Ovary (tissue), 10 donors: ENCODE measurements at regions of chr5 and their contacts with region 1.

Region 1: GRCh38 chr5:82165740-82166530 is 112.2 kb downstream of the RPS23 start:
- DNase-seq: peak; percentile 67 to 83 (median 75)
- H3K4me3 ChIP-seq: no peak overlapping the region
- H3K27ac ChIP-seq: no peak overlapping the region
- H3K4me1 ChIP-seq: peaks cover 4% of the 10 kb centered on the region
- H3K27me3 ChIP-seq: no peaks in the 10 kb centered on the region
- CTCF ChIP-seq: peak; percentile 75 to 89 (median 84)
- EP300 ChIP-seq: no peak
- POLR2A ChIP-seq: no peak

Region 2: GRCh38 chr5:81425569-81425968 is 740.4 kb before region 1 on chr5:
- intact Hi-C with region 1: loop called in 2 of 4 experiments (anchors 5 to 10 kb)
- DNase-seq: no peak
- H3K4me3 ChIP-seq: no peak overlapping the region
- H3K27ac ChIP-seq: no peak overlapping the region
- H3K4me1 ChIP-seq: peaks cover 3% of the 10 kb centered on the region
- H3K27me3 ChIP-seq: no peaks in the 10 kb centered on the region
- CTCF ChIP-seq: peak; percentile 40 to 60 (median 45)
- EP300 ChIP-seq: no peak
- POLR2A ChIP-seq: no peak

Region 3: GRCh38 chr5:81696418-81697397 is 469.2 kb before region 1 on chr5:
- intact Hi-C with region 1: no loop called
- DNase-seq: no peak
- H3K4me3 ChIP-seq: no peak overlapping the region
- H3K27ac ChIP-seq: no peak overlapping the region
- H3K4me1 ChIP-seq: peaks cover 1% of the 10 kb centered on the region
- H3K27me3 ChIP-seq: no peaks in the 10 kb centered on the region
- CTCF ChIP-seq: no peak
- EP300 ChIP-seq: no peak
- POLR2A ChIP-seq: no peak